Heart left ventricle (tissue), 16 donors: ENCODE measurements at regions of chr17 and their contacts with region 1.

Region 1: DNA sequence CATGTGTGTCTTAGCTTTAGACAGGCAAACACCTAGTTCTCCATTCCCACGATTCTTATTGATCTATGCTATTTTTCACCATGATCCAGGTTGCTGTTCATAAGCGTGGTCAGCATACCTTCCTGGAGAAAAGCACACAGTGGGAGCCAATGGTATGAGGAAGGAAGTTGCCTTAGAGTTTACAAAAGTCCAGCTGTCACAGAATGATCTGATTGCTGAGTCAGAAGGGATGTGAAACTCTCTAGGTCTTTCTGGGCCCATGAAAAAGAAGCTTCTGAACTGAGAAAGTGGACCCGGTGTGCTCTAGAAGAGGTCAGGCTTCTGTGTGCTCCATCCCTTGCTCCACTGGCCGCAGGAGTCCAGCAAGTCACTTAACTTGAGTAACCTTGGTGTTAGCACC is 71.0 kb upstream of the CCL1 start:
- DNase-seq: no peak
- ATAC-seq: peak in 3 of 4 donors; percentile 33 to 54 (median 41)
- H3K4me3 ChIP-seq: no peak overlapping the region
- H3K27ac ChIP-seq: peak overlapping the region in 1 of 12 donors; percentile 23
- H3K4me1 ChIP-seq: peaks cover 0 to 25% (median 0%) of the 10 kb centered on the region in 12 donors
- H3K27me3 ChIP-seq: peaks cover 0 to 20% (median under 1%) of the 10 kb centered on the region in 9 donors
- CTCF ChIP-seq: no peak
- POLR2A ChIP-seq: no peak

Region 2: DNA sequence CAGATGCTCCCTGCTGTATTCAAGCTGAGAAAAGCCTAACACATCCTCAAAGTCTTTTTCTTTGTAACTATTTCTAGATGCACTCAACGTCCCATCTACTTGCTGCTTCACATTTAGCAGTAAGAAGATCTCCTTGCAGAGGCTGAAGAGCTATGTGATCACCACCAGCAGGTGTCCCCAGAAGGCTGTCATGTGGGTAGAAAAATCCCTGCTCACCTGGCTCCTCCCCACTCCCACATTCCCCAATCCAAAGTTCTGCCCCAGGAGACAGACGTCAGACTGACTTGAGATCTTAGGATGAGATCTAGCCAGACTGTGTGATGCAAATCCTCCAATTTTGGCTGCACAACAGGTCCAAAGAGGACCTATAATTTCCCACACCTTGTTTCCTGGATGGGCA is 76.7 kb before region 1 on chr17:
- intact Hi-C with region 1: no loop called
- DNase-seq: no peak
- ATAC-seq: no peak
- H3K4me3 ChIP-seq: peak overlapping the region in 1 of 12 donors; percentile 31
- H3K27ac ChIP-seq: no peak overlapping the region
- H3K4me1 ChIP-seq: peaks cover 0 to 29% (median 3%) of the 10 kb centered on the region in 12 donors
- H3K27me3 ChIP-seq: peaks cover 0 to 3% (median 0%) of the 10 kb centered on the region in 9 donors
- CTCF ChIP-seq: no peak
- POLR2A ChIP-seq: no peak

Region 3: DNA sequence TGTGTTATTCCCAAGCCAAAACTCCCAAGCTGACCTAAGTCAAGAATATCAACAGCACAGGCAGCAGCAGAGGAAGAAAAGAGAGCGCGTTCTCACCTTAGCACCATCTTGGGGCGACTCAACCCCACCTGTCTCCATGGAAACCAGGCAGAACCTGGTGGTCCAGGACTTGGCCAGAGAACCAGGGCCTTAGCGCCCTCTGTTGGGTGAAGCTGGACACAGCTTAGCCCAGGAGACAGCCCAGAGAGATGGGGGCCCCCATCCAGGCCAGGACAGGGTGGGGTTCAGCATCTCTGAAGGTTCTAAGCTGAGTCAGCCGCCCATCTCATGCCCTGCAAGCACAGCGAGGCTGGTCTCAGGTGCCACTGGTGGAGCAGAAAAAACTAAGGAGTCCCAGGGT is 85.2 kb after region 1 on chr17:
- intact Hi-C with region 1: loop called in 2 of 10 experiments (anchors 5 to 10 kb)
- DNase-seq: no peak
- ATAC-seq: no peak
- H3K4me3 ChIP-seq: no peak overlapping the region
- H3K27ac ChIP-seq: no peak overlapping the region
- H3K4me1 ChIP-seq: no peaks in the 10 kb centered on the region
- H3K27me3 ChIP-seq: peaks cover 0 to 34% (median 13%) of the 10 kb centered on the region in 9 donors
- CTCF ChIP-seq: peak in 11 of 12 donors; percentile 12 to 55 (median 40)
- POLR2A ChIP-seq: no peak

Region 4: DNA sequence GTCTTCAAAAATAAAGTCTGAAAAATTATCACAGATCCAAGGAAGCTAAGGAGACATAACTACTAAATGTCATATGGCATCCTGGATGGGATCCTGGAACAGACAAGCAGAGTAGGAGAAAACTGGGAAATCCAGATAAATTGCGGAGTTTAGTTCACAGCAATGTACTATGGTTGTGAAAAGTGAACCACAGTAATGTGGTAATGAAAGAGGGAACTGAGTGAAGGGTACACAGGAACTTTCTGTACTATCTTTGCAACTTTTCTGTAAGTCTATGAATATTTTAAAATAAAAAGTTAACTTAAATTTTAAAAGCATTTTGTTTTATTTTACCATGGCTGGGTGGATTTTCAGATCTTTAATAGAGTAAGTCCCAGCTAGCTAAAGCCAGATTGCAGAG is 1087.1 kb after region 1 on chr17:
- intact Hi-C with region 1: loop called in 1 of 10 experiments (anchors 10 kb)
- DNase-seq: no peak
- ATAC-seq: no peak
- H3K4me3 ChIP-seq: peak overlapping the region in 1 of 12 donors; percentile 23
- H3K27ac ChIP-seq: peak overlapping the region in 1 of 12 donors; percentile 61
- H3K4me1 ChIP-seq: peaks cover 0 to 43% (median 0%) of the 10 kb centered on the region in 12 donors
- H3K27me3 ChIP-seq: no peaks in the 10 kb centered on the region
- CTCF ChIP-seq: no peak
- POLR2A ChIP-seq: no peak